CD8-positive, alpha-beta T cell (primary cell): ENCODE measurements at regions of chr18 and their contacts with region 1.

Region 1: GRCh38 chr18:11851146-11851805 is at the start of gene CHMP1B:
- DNase-seq: peak; percentile 93 to 99 (median 98)
- ATAC-seq: peak; percentile 83
- H3K4me3 ChIP-seq: peak within 1 kb of the TSS; percentile 94 to 99
- H3K4me3 Mint-ChIP-seq: peak within 1 kb of the TSS; percentile 100
- H3K27ac ChIP-seq: peak within 1 kb of the TSS; percentile 96 to 99
- H3K27ac Mint-ChIP-seq: peak within 1 kb of the TSS; percentile 100
- H3K4me1 ChIP-seq: peaks cover 25% of the 10 kb centered on the region
- H3K4me1 Mint-ChIP-seq: peaks cover 50% of the 10 kb centered on the region
- H3K27me3 ChIP-seq: no peaks in the 10 kb centered on the region
- H3K27me3 Mint-ChIP-seq: no peaks in the 10 kb centered on the region
- CTCF ChIP-seq: no peak
- total RNA-seq, gene CHMP1B: 71.2 to 74.2 TPM

Region 2: DNA sequence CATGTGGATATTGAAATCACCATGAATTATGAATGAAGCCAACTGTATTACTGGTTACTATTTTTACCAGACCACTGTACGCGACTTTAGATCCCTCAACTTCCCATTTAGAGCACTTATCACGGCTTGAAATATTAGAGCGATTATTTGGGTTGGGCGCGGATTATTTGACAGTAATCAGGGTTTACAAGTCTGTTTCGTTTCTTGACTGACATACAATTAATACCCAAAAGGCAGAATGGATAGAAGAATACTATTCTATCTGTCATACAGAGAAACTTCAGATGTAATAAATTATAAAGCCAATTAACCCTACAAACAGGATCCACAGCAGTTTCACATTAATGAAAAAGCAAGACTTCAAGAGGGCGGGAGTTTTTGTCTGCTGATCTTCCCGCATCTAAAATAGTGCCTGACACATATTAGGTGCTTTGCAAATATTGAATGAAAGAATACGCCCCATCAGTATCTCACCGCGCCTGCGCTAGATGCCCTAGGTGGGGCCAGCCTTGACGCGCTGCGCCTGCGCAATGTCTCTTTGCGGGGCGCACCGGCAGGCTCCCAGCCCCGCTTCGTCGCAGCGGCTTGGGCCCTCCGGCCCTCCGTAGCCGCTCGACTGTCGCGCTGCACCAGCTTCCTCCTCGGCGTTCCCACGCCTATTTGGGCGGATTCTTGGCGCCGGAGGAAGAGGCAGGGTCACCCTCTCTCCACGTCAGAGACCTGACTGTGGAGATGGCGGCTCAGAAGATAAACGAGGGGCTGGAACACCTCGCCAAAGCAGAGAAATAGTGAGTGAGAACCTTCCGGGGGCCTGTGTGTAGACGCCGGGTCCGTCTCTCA is 1325.7 kb before region 1 on chr18 and contains the start of gene NAPG:
- CTCF ChIA-PET with region 1: no interaction called
- POLR2A ChIA-PET with region 1: no interaction called
- intact Hi-C with region 1: loop called (anchors 2 to 5 kb)
- DNase-seq: peak; percentile 78 to 97 (median 88)
- ATAC-seq: peak; percentile 86
- H3K4me3 ChIP-seq: peak within 1 kb of the TSS; percentile 90 to 98
- H3K4me3 Mint-ChIP-seq: peak within 1 kb of the TSS; percentile 97
- H3K27ac ChIP-seq: peak within 1 kb of the TSS; percentile 75 to 87
- H3K27ac Mint-ChIP-seq: peak within 1 kb of the TSS; percentile 96
- H3K4me1 ChIP-seq: peaks cover 31% of the 10 kb centered on the region
- H3K4me1 Mint-ChIP-seq: peaks cover 50% of the 10 kb centered on the region
- H3K27me3 ChIP-seq: no peaks in the 10 kb centered on the region
- H3K27me3 Mint-ChIP-seq: no peaks in the 10 kb centered on the region
- CTCF ChIP-seq: no peak
- total RNA-seq, gene NAPG: 33.2 to 35.8 TPM

Region 3: DNA sequence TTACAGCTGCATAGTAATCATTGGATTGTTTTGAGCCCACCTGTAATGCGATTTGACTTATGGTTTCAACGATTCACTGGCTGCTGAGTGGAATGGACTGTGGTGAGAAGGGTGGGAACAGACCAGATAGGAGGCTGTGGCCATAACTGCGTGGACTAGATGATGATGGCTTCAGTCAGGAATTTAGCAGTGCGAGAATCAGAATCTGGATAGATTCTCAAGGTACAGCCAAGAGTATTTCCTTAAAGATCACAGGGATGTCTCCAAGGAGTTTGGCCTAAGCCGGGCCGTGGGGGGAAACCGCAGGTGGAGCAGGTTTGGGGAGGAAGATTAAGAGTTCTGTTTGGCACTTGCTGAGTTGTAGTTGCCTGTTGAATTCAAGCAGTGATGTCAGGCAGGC is 44.0 kb before region 1 on chr18:
- CTCF ChIA-PET with region 1: no interaction called
- POLR2A ChIA-PET with region 1: no interaction called
- intact Hi-C with region 1: no loop called
- DNase-seq: no peak
- ATAC-seq: no peak
- H3K4me3 ChIP-seq: no peak overlapping the region
- H3K4me3 Mint-ChIP-seq: no peak overlapping the region
- H3K27ac ChIP-seq: no peak overlapping the region
- H3K27ac Mint-ChIP-seq: no peak overlapping the region
- H3K4me1 ChIP-seq: no peaks in the 10 kb centered on the region
- H3K4me1 Mint-ChIP-seq: no peaks in the 10 kb centered on the region
- H3K27me3 ChIP-seq: no peaks in the 10 kb centered on the region
- H3K27me3 Mint-ChIP-seq: peaks cover 16% of the 10 kb centered on the region
- CTCF ChIP-seq: no peak

Region 4: DNA sequence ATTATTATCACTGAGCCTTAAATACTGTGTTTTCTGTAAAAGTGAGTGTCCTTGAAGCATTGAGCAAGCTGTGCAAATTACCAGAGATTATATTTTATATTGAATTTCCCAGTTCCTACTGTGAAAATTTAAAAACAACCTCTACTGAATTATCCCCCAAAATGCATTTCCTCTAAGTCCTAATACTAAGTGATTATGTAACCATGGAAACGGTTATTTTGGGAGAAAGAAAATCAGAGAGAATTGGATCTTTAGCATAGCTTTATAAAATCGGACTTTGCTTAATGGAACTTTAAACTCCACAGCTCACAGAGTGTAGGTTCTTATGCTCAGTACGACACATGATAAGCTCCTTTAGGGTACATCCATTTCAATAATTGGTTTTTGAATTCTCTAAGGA is 19.4 kb before region 1 on chr18:
- CTCF ChIA-PET with region 1: no interaction called
- POLR2A ChIA-PET with region 1: no interaction called
- intact Hi-C with region 1: no loop called
- DNase-seq: no peak
- ATAC-seq: no peak
- H3K4me3 ChIP-seq: no peak overlapping the region
- H3K4me3 Mint-ChIP-seq: no peak overlapping the region
- H3K27ac ChIP-seq: no peak overlapping the region
- H3K27ac Mint-ChIP-seq: no peak overlapping the region
- H3K4me1 ChIP-seq: no peaks in the 10 kb centered on the region
- H3K4me1 Mint-ChIP-seq: no peaks in the 10 kb centered on the region
- H3K27me3 ChIP-seq: no peaks in the 10 kb centered on the region
- H3K27me3 Mint-ChIP-seq: no peaks in the 10 kb centered on the region
- CTCF ChIP-seq: no peak

Region 5: GRCh38 chr18:11980555-11981382 is 129.5 kb after region 1 on chr18:
- CTCF ChIA-PET with region 1: no interaction called
- POLR2A ChIA-PET with region 1: interaction called, 5 read pairs
- intact Hi-C with region 1: loop called (anchors 1 kb)
- DNase-seq: peak; percentile 88 to 97 (median 92)
- ATAC-seq: peak; percentile 90
- H3K4me3 ChIP-seq: peak overlapping the region; percentile 56 to 68
- H3K4me3 Mint-ChIP-seq: peak overlapping the region; percentile 85
- H3K27ac ChIP-seq: no peak overlapping the region
- H3K27ac Mint-ChIP-seq: peak overlapping the region; percentile 52
- H3K4me1 ChIP-seq: no peaks in the 10 kb centered on the region
- H3K4me1 Mint-ChIP-seq: peaks cover 11% of the 10 kb centered on the region
- H3K27me3 ChIP-seq: peaks cover 0 to 2% of the 10 kb centered on the region in 2 experiments
- H3K27me3 Mint-ChIP-seq: no peaks in the 10 kb centered on the region
- CTCF ChIP-seq: no peak

Region 6: DNA sequence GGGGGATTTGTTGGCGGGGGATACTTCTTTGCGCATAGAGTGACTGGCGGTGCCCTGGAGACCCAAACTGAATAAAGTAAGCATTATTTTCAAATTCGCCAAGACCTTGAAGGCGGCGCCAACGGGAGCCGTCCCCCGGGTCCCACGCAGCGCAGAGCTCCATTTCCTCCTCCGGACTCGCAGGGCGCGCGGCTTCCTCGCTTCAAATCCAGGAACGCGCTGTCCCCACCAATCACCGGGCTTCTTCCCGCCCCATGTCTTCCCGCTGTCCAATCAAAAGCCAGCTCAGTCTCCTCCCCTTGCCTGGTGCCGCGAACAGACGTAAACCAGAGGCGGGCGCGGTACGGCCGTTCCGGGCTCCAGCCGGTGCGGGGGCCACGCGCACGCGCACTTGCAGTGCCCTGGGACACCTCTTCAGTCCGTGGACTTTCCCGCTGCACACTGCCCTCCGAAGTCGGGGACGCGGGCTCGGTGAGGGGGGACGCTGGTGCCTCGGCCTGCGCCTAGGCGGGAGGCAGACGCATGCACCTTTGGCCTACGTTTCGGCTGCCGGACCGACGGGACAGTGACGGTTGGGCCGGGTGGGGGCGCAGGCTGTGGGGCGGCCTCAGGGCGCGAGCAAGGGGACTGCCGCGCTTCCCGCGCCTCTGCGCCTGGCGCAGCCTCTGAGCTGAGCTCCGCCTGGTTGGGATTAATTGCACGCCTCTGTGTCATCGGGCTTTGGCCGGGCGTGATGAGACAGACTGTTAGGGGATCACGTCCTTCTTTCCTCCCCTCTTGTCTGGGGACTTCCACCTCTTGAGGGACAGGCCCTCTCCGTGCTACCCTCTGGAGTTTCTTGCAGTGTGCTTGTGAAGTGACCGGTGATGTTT is 1139.9 kb after region 1 on chr18 and contains the start of gene CEP192:
- CTCF ChIA-PET with region 1: no interaction called
- POLR2A ChIA-PET with region 1: no interaction called
- intact Hi-C with region 1: loop called in 1 of 2 experiments (anchors 2 kb)
- DNase-seq: peak; percentile 94 to 99 (median 97)
- ATAC-seq: peak; percentile 96
- H3K4me3 ChIP-seq: peak within 1 kb of the TSS; percentile 79 to 90
- H3K4me3 Mint-ChIP-seq: peak within 1 kb of the TSS; percentile 98
- H3K27ac ChIP-seq: peak within 1 kb of the TSS; percentile 57 to 75
- H3K27ac Mint-ChIP-seq: peak within 1 kb of the TSS; percentile 97
- H3K4me1 ChIP-seq: peaks cover 27% of the 10 kb centered on the region
- H3K4me1 Mint-ChIP-seq: peaks cover 17% of the 10 kb centered on the region
- H3K27me3 ChIP-seq: no peaks in the 10 kb centered on the region
- H3K27me3 Mint-ChIP-seq: no peaks in the 10 kb centered on the region
- CTCF ChIP-seq: no peak
- total RNA-seq, gene CEP192: 22.8 to 24.3 TPM

Region 7: GRCh38 chr18:13137670-13138419 is 1286.6 kb after region 1 on chr18:
- CTCF ChIA-PET with region 1: no interaction called
- POLR2A ChIA-PET with region 1: no interaction called
- intact Hi-C with region 1: loop called in 1 of 2 experiments (anchors 5 kb)
- DNase-seq: peak; percentile 28 to 90 (median 61)
- ATAC-seq: peak; percentile 73
- H3K4me3 ChIP-seq: peak overlapping the region; percentile 84 to 98
- H3K4me3 Mint-ChIP-seq: peak overlapping the region; percentile 94
- H3K27ac ChIP-seq: peak overlapping the region; percentile 87 to 90
- H3K27ac Mint-ChIP-seq: peak overlapping the region; percentile 96
- H3K4me1 ChIP-seq: peaks cover 20% of the 10 kb centered on the region
- H3K4me1 Mint-ChIP-seq: peaks cover 28% of the 10 kb centered on the region
- H3K27me3 ChIP-seq: no peaks in the 10 kb centered on the region
- H3K27me3 Mint-ChIP-seq: no peaks in the 10 kb centered on the region
- CTCF ChIP-seq: no peak